GM10248 (cell line): ENCODE measurements at regions of chr6 and their contacts with region 1.

Region 1: GRCh38 chr6:106735136-106735633 is 105.8 kb downstream of the QRSL1 start:
- DNase-seq: no peak
- CTCF ChIP-seq: no peak

Region 2: DNA sequence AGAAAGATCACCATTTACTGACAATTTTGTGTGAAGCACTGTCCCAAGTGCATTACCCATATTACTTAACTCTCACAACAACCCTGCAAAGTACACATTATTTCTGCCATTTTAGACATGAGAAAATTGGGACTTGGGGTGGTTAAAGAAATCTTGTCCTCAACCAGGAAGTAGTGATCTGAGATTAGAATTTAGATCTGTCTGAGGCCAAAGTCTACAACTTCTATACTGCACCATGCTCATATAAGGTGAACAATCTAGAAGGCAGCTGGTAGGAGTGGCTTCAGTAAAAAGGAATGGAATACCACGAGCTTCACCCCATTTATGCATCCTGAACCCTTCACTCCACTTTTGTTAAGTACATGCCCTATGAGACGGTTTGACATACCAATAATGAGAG is 18.2 kb before region 1 on chr6:
- CTCF ChIA-PET with region 1: no interaction called
- POLR2A ChIA-PET with region 1: no interaction called
- DNase-seq: no peak
- CTCF ChIP-seq: no peak

Region 3: GRCh38 chr6:106746660-106747059 is 11.5 kb after region 1 on chr6:
- CTCF ChIA-PET with region 1: interaction called, 13 read pairs
- POLR2A ChIA-PET with region 1: no interaction called
- DNase-seq: no peak
- CTCF ChIP-seq: no peak